Activated CD4-positive, alpha-beta T cell treated with anti-CD3 and anti-CD28 coated beads, Interleukin-2, amount 10 ng/mL, durations not matched to agents 7 days and 5 days (primary cell): ENCODE measurements at regions of chr3 and their contacts with region 1.

Region 1: GRCh38 chr3:112013058-112013783 is 14.5 kb downstream of the TAGLN3 start:
- DNase-seq: peak; percentile 67
- H3K4me3 Mint-ChIP-seq: no peak overlapping the region
- H3K27ac Mint-ChIP-seq: no peak overlapping the region
- H3K4me1 Mint-ChIP-seq: peaks cover 13% of the 10 kb centered on the region
- H3K27me3 Mint-ChIP-seq: no peaks in the 10 kb centered on the region

Region 2: DNA sequence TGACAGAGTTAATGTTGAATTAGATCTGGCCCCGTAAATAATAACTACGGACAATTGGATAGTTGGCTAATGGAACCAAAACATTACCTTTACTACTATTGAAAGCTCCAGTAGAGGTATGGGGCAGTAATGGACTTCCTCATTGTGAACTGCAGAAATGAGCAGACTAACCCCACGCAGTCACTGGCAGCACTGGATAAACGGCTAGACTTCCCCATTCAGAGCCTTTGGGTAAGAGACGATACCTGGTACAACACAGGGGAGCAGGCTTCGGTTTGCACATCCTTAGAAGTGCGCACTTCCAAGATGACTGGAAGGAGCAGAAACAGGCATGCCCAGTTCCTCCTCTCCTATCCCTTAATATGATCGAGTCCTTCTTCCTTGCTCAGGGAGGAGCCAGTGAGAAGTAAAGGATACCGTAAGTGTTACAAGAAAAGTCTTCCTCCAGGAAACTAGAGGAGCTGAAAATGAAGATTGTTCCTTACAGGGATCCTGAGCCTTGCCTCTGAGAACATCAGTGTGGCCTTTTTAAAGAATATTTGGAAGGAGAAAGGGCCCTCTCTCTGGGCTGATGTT is 1042.1 kb before region 1 on chr3:
- CTCF ChIA-PET with region 1: no interaction called
- POLR2A ChIA-PET with region 1: no interaction called
- DNase-seq: no peak
- H3K4me3 Mint-ChIP-seq: no peak overlapping the region
- H3K27ac Mint-ChIP-seq: no peak overlapping the region
- H3K4me1 Mint-ChIP-seq: peaks cover 8% of the 10 kb centered on the region
- H3K27me3 Mint-ChIP-seq: peaks cover 13% of the 10 kb centered on the region

Region 3: DNA sequence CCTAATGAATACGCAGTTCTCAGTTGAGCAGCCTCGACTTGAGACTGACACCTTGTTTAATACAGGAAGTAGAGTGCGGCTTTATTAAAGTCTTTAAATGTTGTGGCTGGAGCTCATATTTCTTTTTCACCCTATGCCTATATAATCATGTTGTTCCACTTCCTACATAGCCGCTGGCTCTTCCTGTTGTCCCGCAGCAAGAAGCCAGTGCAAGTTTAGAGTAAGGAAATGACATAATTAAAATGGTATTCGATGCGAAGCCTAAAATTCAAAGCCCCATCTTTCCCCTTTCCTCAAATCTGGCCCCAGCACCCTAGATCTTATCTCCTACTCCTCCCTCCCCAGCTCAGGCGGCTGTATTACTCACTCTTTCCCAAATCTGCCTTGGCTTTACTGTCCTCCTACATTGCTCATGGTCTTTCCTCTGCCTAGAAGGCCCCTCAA is 161.7 kb before region 1 on chr3:
- CTCF ChIA-PET with region 1: no interaction called
- POLR2A ChIA-PET with region 1: no interaction called
- DNase-seq: no peak
- H3K4me3 Mint-ChIP-seq: no peak overlapping the region
- H3K27ac Mint-ChIP-seq: no peak overlapping the region
- H3K4me1 Mint-ChIP-seq: peaks cover 5% of the 10 kb centered on the region
- H3K27me3 Mint-ChIP-seq: peaks cover 5% of the 10 kb centered on the region

Region 4: DNA sequence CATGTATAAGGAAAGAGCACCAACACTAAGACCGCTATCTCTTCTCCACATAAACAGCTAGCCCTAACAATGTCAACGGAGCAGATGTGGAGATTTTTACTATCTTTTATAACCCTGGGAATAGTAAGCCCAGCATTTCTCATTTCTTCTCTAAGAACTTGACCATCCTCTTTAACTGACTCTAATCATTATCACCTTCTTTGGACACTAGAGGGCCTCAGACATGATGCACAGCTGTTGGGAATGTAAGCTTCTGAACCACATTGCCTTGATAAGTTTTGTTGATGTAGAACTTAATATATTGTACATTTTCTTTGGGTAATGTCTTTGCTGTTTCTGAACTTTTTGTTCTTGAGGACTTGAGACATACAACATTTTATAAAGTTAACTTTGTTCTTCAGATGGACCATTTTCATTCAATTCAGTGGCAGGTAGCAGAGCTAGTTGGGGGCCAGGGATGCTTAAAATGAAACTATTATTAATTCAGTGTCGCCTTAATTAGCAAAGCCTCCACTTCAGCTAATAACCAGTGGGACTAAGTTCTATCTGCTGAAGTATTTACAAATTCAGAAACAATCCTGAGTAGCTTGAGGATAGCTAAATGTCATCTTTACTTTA is 24.1 kb before region 1 on chr3:
- CTCF ChIA-PET with region 1: interaction called, 28 read pairs
- POLR2A ChIA-PET with region 1: interaction called, 3 read pairs
- DNase-seq: peak; percentile 28
- H3K4me3 Mint-ChIP-seq: no peak overlapping the region
- H3K27ac Mint-ChIP-seq: no peak overlapping the region
- H3K4me1 Mint-ChIP-seq: peaks cover 30% of the 10 kb centered on the region
- H3K27me3 Mint-ChIP-seq: no peaks in the 10 kb centered on the region

Region 5: DNA sequence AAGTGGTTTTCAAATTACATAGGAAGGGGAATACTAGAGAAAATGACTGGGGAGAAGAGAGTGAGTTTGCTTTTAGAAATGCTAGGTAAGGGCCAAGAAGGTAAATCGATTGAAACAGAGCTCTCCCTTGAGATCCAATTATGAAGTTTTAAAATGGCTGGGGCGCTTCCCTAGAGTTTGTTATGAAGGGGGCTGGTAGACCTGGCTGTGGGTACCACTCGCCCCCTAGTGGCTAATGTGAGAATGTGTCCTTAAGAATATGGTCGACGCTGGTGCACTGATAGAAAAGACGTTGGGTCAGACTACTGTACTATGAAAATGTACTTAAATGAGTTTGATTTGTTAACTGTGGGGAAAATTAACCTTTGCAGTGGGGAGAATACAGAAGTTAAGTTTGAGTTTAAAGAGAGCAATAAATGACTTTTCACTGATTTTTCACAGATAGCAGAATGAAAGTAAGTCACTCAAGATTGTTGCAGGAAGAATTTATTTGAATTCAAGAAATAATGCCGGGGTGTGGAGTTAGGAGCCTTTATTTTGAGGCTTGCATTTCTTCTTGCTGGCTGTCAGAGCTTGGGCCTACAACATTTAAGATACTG is 30.5 kb after region 1 on chr3:
- CTCF ChIA-PET with region 1: interaction called, 13 read pairs
- POLR2A ChIA-PET with region 1: no interaction called
- DNase-seq: peak; percentile 63
- H3K4me3 Mint-ChIP-seq: no peak overlapping the region
- H3K27ac Mint-ChIP-seq: no peak overlapping the region
- H3K4me1 Mint-ChIP-seq: no peaks in the 10 kb centered on the region
- H3K27me3 Mint-ChIP-seq: no peaks in the 10 kb centered on the region

Region 6: DNA sequence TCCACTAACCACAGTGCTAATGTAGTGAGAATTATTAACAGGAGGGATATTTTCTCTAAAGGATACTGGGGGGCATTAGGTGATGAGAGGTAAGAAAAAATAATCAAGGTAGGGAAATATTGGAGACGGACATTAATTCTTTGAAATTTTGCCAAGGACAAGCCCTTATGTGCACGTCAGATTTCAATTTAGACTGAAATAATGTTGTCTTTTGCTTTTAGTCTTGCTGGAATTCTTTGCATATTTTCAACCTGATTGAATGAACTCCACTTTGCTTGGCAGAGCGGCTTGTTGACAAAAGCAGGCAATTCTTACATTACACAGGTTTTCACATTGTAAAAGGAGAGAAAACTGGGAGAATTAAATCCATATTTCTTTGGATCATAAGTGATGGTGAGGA is 47.9 kb after region 1 on chr3:
- CTCF ChIA-PET with region 1: no interaction called
- POLR2A ChIA-PET with region 1: no interaction called
- DNase-seq: no peak
- H3K4me3 Mint-ChIP-seq: no peak overlapping the region
- H3K27ac Mint-ChIP-seq: no peak overlapping the region
- H3K4me1 Mint-ChIP-seq: peaks cover 12% of the 10 kb centered on the region
- H3K27me3 Mint-ChIP-seq: peaks cover 2% of the 10 kb centered on the region

Region 7: GRCh38 chr3:112117841-112118571 is 104.8 kb after region 1 on chr3:
- CTCF ChIA-PET with region 1: no interaction called
- POLR2A ChIA-PET with region 1: no interaction called
- DNase-seq: no peak
- H3K4me3 Mint-ChIP-seq: no peak overlapping the region
- H3K27ac Mint-ChIP-seq: peak overlapping the region; percentile 34
- H3K4me1 Mint-ChIP-seq: peaks cover 54% of the 10 kb centered on the region
- H3K27me3 Mint-ChIP-seq: no peaks in the 10 kb centered on the region